Tibial artery (tissue), 4 donors: ENCODE measurements at regions of chr14 and their contacts with region 1.

Region 1: GRCh38 chr14:92686900-92687444 is 61.5 kb downstream of the LGMN start:
- DNase-seq: peak; percentile 65 to 87
- H3K4me3 ChIP-seq: peak overlapping the region; percentile 53 to 61
- H3K27ac ChIP-seq: peak overlapping the region; percentile 44 to 61
- H3K4me1 ChIP-seq: peaks cover 0 to 18% (median 15%) of the 10 kb centered on the region in 4 donors
- H3K27me3 ChIP-seq: no peaks in the 10 kb centered on the region
- CTCF ChIP-seq: peak; percentile 93 to 98

Region 2: DNA sequence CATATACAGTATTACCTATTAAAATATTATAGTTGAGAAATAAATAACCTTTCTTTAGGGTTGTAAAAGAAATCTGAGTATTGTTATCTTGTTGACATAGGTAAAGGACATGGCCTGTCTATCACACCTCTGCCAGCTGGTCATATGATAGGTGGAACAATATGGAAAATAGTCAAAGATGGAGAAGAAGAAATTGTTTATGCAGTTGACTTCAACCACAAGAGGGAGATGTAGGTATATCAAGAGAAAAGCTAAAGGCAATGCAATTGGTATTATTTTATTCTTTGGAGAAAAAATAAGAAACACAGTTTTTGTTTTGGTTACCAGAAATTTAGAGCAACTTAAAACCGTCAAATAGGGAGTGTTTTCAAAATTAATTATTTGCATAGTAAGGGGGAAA is 551.7 kb before region 1 on chr14:
- intact Hi-C with region 1: loop called (anchors 10 kb)
- DNase-seq: no peak
- H3K4me3 ChIP-seq: no peak overlapping the region
- H3K27ac ChIP-seq: no peak overlapping the region
- H3K4me1 ChIP-seq: no peaks in the 10 kb centered on the region
- H3K27me3 ChIP-seq: no peaks in the 10 kb centered on the region
- CTCF ChIP-seq: peak; percentile 45 to 53

Region 3: DNA sequence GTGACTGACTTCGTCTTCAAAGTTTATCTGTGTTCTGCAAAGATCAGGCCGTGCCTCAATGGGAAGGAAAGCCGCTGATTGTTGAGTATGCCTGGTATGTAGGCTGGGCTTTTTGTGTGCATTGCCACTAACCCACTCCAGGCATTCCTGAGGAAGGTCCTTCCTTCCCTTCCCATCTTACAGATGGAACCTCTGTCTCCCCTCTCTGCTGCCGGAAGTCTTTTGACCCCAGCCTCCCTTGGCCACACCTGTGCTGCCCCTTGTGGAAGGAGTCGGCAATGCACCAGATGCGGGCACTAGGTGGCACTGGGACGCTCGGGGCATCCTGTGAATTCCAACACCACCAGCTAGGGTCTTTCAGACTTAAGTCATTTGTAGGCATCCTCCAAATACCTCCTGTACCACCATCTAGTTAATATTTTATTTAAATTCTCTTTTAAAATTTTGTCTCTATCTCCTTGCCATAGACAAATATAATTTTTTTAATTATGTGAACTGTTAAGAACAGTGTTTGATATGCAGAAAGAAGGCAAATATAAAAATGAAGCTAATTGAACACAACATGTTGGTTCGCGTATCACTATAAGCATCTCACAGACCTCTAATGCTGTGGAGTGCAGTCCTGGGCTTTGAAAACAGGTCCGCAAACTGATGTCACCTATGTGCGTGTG is 73.8 kb before region 1 on chr14:
- intact Hi-C with region 1: loop called (anchors 10 kb)
- DNase-seq: no peak
- H3K4me3 ChIP-seq: no peak overlapping the region
- H3K27ac ChIP-seq: no peak overlapping the region
- H3K4me1 ChIP-seq: peaks cover 0 to 12% (median 7%) of the 10 kb centered on the region in 4 donors
- H3K27me3 ChIP-seq: no peaks in the 10 kb centered on the region
- CTCF ChIP-seq: peak; percentile 43 to 46